ENCODE measurements at regions of chr21 and their contacts with region 1.

Region 1: DNA sequence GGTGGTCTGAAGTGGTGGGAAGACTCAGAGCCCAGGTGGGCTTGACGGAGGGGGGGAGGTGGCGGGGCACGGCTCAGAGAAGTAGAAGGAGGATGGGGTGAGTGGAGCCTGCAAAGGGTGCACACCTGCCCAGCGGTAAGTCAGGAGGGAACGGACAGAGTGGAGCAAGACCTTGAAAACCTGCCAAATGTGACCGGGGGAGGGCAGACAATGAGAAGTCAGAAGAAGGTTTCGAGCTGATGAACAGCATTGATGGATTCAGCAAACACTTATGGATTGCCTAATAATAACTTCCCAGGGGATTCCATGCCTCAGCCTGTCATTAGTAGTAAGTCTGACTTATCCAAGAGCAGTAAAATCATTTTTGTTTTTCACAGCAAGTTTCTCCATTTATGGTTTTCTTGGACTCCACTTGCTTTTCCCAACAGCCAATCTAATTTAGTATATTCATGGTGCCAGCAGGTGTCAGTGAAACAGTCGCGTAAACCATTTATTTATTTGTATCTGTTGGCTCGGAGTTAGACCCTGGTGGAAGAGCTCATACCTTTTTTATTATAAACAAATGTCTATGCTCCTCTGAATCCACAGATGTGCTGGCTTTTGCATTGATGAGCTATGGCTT is 279.1 kb downstream of the PCP4 start:
- DNase-seq: no peak
- ATAC-seq: no peak
- H3K4me3 ChIP-seq: no peak overlapping the region
- H3K27ac ChIP-seq: no peak overlapping the region
- H3K4me1 ChIP-seq: no peaks in the 10 kb centered on the region
- H3K27me3 ChIP-seq: no peaks in the 10 kb centered on the region
- CTCF ChIP-seq: no peak
- EP300 ChIP-seq: no peak
- POLR2A ChIP-seq: no peak
- RAD21 ChIP-seq: no peak

Region 2: DNA sequence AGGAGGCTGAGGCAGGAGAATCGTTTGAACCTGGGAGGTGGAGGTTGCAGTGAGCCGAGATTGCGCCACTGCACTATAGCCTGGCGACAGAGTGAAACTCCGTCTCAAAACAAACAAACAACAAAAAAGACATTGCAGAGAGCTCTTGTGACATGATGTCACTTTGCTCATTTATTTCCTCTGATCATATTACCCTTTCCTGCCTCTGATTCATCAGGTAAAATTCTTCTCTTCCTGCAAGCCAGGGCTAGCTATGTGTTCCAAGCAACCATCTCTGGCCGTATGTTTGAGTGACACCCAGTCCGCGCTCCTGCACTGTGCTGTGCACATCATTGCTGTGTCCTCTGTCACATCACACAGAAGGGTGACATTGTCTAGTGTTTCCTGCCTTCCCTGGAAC is 27.8 kb before region 1 on chr21:
- CTCF ChIA-PET with region 1: no interaction called
- POLR2A ChIA-PET with region 1: no interaction called
- RAD21 ChIA-PET with region 1: no interaction called
- SMC1A ChIA-PET with region 1: no interaction called
- in situ Hi-C with region 1: no loop called
- intact Hi-C with region 1: no loop called
- DNase-seq: no peak
- ATAC-seq: no peak
- H3K4me3 ChIP-seq: no peak overlapping the region
- H3K27ac ChIP-seq: no peak overlapping the region
- H3K4me1 ChIP-seq: no peaks in the 10 kb centered on the region
- H3K27me3 ChIP-seq: no peaks in the 10 kb centered on the region
- CTCF ChIP-seq: no peak
- EP300 ChIP-seq: no peak
- POLR2A ChIP-seq: no peak
- RAD21 ChIP-seq: no peak

Region 3: GRCh38 chr21:41068967-41069642 is 922.8 kb after region 1 on chr21:
- CTCF ChIA-PET with region 1: interaction called, 5 read pairs
- POLR2A ChIA-PET with region 1: no interaction called
- RAD21 ChIA-PET with region 1: no interaction called
- SMC1A ChIA-PET with region 1: no interaction called
- in situ Hi-C with region 1: no loop called
- intact Hi-C with region 1: loop called (anchors 2 kb)
- DNase-seq: no peak
- ATAC-seq: peak; percentile 58
- H3K4me3 ChIP-seq: no peak overlapping the region
- H3K27ac ChIP-seq: no peak overlapping the region
- H3K4me1 ChIP-seq: no peaks in the 10 kb centered on the region
- H3K27me3 ChIP-seq: no peaks in the 10 kb centered on the region
- CTCF ChIP-seq: peak; percentile 65 to 72 (median 65); a peak in 5 of 6 replicates
- EP300 ChIP-seq: no peak
- POLR2A ChIP-seq: no peak
- RAD21 ChIP-seq: peak; percentile 56

Measured in GM12878 (cell line).